Testis (tissue), 5 donors: ENCODE measurements at regions of chr14 and their contacts with region 1.

Region 1: DNA sequence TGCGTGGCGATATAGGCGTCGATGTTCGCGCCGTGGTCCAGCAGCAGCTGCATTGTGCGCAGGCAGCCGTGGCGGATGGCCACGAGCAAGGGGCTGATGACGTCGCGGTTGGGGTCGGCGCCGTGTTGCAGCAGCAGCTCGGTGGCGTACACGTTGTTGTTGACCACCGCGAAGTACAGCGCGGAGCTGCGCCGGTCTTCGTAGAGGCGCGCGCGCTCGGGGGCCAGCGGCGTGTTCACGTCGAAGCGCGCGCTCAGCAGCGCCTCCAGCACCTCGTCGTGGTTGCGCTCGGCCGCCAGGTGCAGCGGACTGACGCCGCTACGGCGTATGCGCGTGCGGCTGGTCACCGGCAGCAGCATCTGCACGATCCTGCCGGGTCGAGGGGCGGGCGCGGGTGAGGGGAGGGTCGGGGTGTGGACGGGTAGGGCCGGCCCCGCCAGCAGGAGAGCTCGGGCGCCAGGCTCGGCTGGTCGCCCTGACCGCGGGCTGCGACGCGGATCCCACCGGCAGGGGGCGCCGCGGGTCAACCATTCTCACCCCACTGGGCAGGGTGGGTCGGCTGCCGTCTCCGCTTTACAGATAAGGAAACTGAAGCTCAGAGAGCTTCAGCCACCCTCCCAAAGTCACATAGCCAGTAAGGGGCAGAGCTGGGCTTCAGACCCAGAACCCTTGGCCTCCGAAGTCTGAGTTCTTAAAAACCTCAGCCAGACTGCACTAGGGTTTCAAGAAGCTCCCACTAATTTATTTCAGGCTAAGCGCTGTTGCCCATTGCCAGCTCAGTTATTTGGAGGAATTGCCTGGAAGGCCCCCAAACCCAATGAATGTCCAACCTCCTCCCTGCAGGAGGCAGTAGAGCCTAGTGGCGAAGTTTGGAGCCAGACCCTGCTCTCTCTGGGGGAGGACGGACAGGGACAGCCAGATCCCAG is 12.4 kb downstream of the FAM181A start:
- DNase-seq: peak; percentile 88
- H3K4me3 ChIP-seq: peak overlapping the region; percentile 51 to 56
- H3K27ac ChIP-seq: no peak overlapping the region
- H3K4me1 ChIP-seq: no peaks in the 10 kb centered on the region
- H3K27me3 ChIP-seq: no peaks in the 10 kb centered on the region
- CTCF ChIP-seq: peak; percentile 76 to 95 (median 91)
- POLR2A ChIP-seq: no peak

Region 2: GRCh38 chr14:94001501-94002396 is 62.2 kb after region 1 on chr14:
- intact Hi-C with region 1: loop called (anchors 5 kb)
- DNase-seq: peak; percentile 80
- H3K4me3 ChIP-seq: peak overlapping the region; percentile 5 to 23
- H3K27ac ChIP-seq: no peak overlapping the region
- H3K4me1 ChIP-seq: peaks cover 9% of the 10 kb centered on the region
- H3K27me3 ChIP-seq: no peaks in the 10 kb centered on the region
- CTCF ChIP-seq: peak; percentile 91 to 97 (median 96)
- POLR2A ChIP-seq: no peak